SK-N-SH (cell line): ENCODE measurements at regions of chr7 and their contacts with region 1.

Region 1: DNA sequence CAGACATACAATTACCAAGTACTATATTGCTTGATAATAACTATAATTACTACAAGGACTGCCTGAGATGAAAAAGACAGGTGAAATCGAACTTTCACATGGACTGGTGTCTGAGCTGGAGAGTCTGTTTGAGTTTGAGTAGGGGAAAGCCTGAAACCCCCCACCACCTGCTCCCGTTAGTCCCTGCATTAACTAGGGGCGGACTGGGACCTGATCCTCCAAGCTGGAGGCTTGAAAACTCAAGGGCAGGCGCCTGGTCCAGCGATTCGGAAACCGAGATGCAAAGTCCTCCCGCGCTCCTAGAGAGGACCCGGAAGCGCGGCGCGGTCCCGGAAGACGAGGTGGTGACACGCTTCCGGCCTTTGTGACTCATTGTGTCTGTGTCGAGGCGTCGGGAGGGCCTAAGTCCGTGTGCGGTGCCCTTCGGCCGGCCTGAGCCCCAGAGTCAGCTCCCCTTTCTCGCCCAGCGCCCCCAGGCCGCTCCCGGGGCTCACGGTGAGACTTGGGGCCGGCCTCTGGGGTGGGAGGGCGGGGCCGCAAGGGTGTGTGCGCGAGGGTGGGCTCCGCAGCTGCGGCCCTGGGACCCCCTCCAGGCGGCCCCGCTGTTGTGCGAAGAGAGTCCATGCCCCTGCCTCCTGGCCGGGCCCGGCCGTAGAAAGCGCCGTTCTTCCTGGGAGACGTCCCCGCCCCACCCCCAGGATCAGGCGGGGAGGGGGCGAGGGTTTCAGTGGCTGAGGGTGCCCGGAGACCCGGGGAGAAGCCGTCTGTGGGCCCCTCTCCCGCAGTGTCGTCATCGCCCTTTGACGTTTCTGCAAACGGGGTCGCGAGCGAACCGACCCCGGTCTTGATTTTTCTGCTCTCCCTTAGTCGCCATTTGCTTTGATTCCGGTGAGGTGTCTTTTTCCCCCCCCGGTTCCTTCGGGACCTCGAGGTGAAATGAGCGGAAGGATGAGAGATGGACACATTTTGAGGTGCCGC is at the start of gene ZKSCAN1:
- DNase-seq: peak; percentile 98
- H3K4me3 ChIP-seq: peak within 1 kb of the TSS; percentile 78 to 89
- H3K27ac ChIP-seq: peak within 1 kb of the TSS; percentile 78 to 85
- H3K4me1 ChIP-seq: peaks cover 0 to 12% of the 10 kb centered on the region in 2 experiments; a peak in 3 of 4 replicates
- H3K27me3 ChIP-seq: no peaks in the 10 kb centered on the region
- CTCF ChIP-seq: no peak
- EP300 ChIP-seq: no peak
- RAD21 ChIP-seq: no peak; the same call in 1 of the 2 replicates
- polyA plus RNA-seq, gene ZKSCAN1: 21.1 and 30.7 TPM in 2 replicates

Region 2: DNA sequence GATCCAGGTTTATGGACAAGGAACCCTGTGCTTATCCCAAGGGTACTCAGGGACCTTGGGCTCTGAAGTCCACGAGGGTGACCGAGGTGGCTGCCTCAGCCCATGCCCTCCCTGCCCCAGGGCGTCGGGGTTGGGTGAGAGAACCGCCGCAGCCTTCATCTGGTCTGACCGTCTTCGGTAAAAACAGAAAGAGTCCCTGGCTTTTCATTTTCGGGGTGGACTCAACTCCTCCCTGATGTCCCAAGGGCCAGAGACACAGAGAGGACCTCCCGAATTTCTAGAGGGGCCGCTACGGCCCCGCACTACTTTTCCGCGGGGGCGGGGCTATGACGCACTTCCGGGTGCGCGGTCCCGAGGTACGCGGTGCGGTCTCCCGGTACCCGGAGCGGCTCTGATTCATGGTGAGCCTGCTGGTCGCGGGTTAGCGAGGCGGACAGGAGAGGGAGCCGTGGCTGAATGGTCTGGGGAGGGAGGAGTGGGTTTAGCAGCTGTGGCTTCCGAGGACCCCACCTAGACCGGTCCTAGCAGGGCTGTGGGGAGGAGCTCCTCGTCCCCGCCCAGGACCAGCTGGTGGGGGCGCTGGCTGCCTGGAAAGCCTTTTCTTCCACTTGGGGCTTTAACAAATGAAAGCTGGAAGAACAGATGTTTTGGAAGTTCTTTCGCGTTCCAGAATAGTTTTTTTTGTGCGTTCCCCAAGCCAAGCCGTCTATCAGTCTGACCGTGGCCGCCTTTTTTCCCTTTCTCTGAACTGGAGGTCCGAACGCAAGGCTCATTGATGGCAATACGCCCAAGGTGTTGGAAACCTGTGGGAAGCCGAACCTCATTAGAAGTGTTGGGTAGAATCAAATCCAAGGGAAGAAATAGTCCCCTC is 34.2 kb after region 1 on chr7 and contains the start of gene ZSCAN21:
- CTCF ChIA-PET with region 1: interaction called, 7 read pairs
- POLR2A ChIA-PET with region 1: interaction called, 24 read pairs
- DNase-seq: peak; percentile 96
- H3K4me3 ChIP-seq: peak within 1 kb of the TSS; percentile 70 to 86
- H3K27ac ChIP-seq: peak within 1 kb of the TSS; percentile 93 to 94
- H3K4me1 ChIP-seq: peaks cover 5 to 9% of the 10 kb centered on the region in 2 experiments; a peak in 2 of 4 replicates
- H3K27me3 ChIP-seq: no peaks in the 10 kb centered on the region
- CTCF ChIP-seq: peak; percentile 47
- EP300 ChIP-seq: 0 out of 4 replicates have a peak, but pooled peaks of 1 of the 2 experiments have one; percentile 20
- RAD21 ChIP-seq: peak; percentile 31; the same call in 1 of the 2 replicates
- polyA plus RNA-seq, gene ZSCAN21: 17.5 and 22.8 TPM in 2 replicates

Region 3: GRCh38 chr7:100091411-100092181 is 76.1 kb after region 1 on chr7:
- CTCF ChIA-PET with region 1: no interaction called
- POLR2A ChIA-PET with region 1: no interaction called
- DNase-seq: peak; percentile 65
- H3K4me3 ChIP-seq: no peak overlapping the region
- H3K27ac ChIP-seq: peak overlapping the region; percentile 2 to 98; a peak in 3 of 4 replicates
- H3K4me1 ChIP-seq: peaks cover 27 to 43% of the 10 kb centered on the region in 2 experiments
- H3K27me3 ChIP-seq: no peaks in the 10 kb centered on the region
- CTCF ChIP-seq: peak; percentile 42
- EP300 ChIP-seq: no peak
- RAD21 ChIP-seq: no peak